ENCODE measurements at regions of chr21 and their contacts with region 1.

Region 1: GRCh38 chr21:35095859-35096291 is 46.8 kb upstream of the RUNX1 start:
- DNase-seq: no peak
- H3K4me3 Mint-ChIP-seq: no peak overlapping the region
- H3K27ac Mint-ChIP-seq: peak overlapping the region; percentile 67
- H3K4me1 Mint-ChIP-seq: peaks cover 42% of the 10 kb centered on the region
- H3K27me3 Mint-ChIP-seq: no peaks in the 10 kb centered on the region

Region 2: GRCh38 chr21:34807146-34807880 is 288.6 kb before region 1 on chr21:
- intact Hi-C with region 1: loop called (anchors 1 kb)
- DNase-seq: peak; percentile 54
- H3K4me3 Mint-ChIP-seq: peak overlapping the region; percentile 56
- H3K27ac Mint-ChIP-seq: peak overlapping the region; percentile 93
- H3K4me1 Mint-ChIP-seq: peaks cover 92% of the 10 kb centered on the region
- H3K27me3 Mint-ChIP-seq: no peaks in the 10 kb centered on the region

Region 3: GRCh38 chr21:34974162-34974981 is 121.5 kb before region 1 on chr21:
- intact Hi-C with region 1: loop called (anchors 2 kb)
- DNase-seq: peak; percentile 65
- H3K4me3 Mint-ChIP-seq: peak overlapping the region; percentile 72
- H3K27ac Mint-ChIP-seq: peak overlapping the region; percentile 79
- H3K4me1 Mint-ChIP-seq: peaks cover 80% of the 10 kb centered on the region
- H3K27me3 Mint-ChIP-seq: peaks cover 12% of the 10 kb centered on the region

Region 4: DNA sequence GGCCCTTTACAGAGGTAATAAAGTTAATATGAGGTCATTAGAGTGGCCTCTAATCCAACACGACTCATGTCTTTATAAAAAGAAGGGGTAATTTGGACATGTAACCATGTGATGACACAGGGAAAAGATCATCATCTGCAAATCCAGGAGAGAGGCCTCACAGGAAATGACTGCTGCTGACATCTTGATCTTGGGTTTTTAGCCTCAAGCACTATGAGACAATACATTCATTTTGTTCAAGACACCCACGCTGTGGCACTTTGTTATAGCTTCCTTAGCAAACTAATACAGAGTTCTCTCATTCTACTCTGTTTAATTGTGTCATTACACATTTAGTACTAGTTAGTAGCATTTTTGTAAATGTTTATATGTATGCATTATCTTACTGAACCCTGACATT is 17.2 kb after region 1 on chr21:
- intact Hi-C with region 1: loop called (anchors 1 kb)
- DNase-seq: no peak
- H3K4me3 Mint-ChIP-seq: no peak overlapping the region
- H3K27ac Mint-ChIP-seq: peak overlapping the region; percentile 22
- H3K4me1 Mint-ChIP-seq: peaks cover 11% of the 10 kb centered on the region
- H3K27me3 Mint-ChIP-seq: no peaks in the 10 kb centered on the region

Region 5: GRCh38 chr21:35198031-35198431 is 102.2 kb after region 1 on chr21:
- intact Hi-C with region 1: loop called (anchors 2 kb)
- DNase-seq: no peak
- H3K4me3 Mint-ChIP-seq: no peak overlapping the region
- H3K27ac Mint-ChIP-seq: no peak overlapping the region
- H3K4me1 Mint-ChIP-seq: peaks cover 19% of the 10 kb centered on the region
- H3K27me3 Mint-ChIP-seq: peaks cover 6% of the 10 kb centered on the region

Region 6: DNA sequence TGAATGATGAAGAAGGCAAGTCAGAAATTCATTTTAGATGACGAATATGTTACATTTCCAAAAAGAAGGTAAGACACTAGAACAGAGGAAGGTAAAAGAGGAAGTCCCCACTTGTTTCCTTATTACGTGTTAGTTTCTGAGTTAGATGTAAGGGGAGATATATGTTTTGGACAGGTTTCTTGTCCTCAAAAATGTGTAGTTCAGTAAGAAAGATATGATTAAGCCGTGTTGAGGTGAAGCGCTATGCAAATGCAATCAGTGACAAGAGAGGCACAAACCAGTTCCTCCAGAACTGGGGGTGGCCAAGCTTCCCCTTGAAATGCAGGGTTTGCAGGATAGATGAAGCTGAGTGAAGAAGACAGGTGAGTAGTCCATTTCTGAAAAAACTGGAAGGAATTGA is 246.6 kb after region 1 on chr21:
- intact Hi-C with region 1: loop called (anchors 1 kb)
- DNase-seq: no peak
- H3K4me3 Mint-ChIP-seq: peak overlapping the region; percentile 75
- H3K27ac Mint-ChIP-seq: peak overlapping the region; percentile 99
- H3K4me1 Mint-ChIP-seq: peaks cover 51% of the 10 kb centered on the region
- H3K27me3 Mint-ChIP-seq: no peaks in the 10 kb centered on the region

Measured in activated T-helper 1 cell treated with anti-CD3 and anti-CD28 coated beads, Interleukin-12 subunit alpha, Interleukin-12 subunit beta, Interleukin-2, Interleukin-4 antibody, amounts not matched to agents 30 ng/mL and 10 ng/mL and 1 ng/mL, durations not matched to agents 14 hours and 24 hours and 36 hours (primary cell).